ENCODE measurements at regions of chr1 and their contacts with region 1.

Region 1: GRCh38 chr1:55284852-55285251 is 69.7 kb upstream of the USP24 start:
- DNase-seq: peak; percentile 43
- H3K4me3 ChIP-seq: no peak overlapping the region
- H3K27ac ChIP-seq: no peak overlapping the region
- H3K27me3 ChIP-seq: no peaks in the 10 kb centered on the region
- CTCF ChIP-seq: peak; percentile 74

Region 2: DNA sequence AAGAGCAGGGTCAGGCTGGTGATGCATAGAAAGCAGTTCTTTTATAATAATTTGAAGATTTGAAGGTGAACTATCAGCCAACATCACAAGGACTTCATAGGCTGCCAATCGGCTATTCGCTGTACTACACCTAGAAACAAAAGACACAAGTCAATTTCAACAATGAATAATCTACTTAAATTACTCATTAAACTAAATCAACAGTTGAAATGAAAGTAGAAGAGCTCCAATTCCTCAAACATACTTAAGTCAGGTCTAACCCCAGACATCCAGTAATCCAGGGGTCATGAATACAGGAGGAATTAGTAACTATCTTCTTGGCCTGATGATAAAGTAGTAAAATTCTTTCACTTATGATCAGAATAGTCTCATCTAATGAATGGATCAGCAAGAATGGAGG is 181.0 kb before region 1 on chr1:
- in situ Hi-C with region 1: no loop called
- DNase-seq: no peak
- H3K4me3 ChIP-seq: no peak overlapping the region
- H3K27ac ChIP-seq: no peak overlapping the region
- H3K27me3 ChIP-seq: no peaks in the 10 kb centered on the region
- CTCF ChIP-seq: no peak

Region 3: DNA sequence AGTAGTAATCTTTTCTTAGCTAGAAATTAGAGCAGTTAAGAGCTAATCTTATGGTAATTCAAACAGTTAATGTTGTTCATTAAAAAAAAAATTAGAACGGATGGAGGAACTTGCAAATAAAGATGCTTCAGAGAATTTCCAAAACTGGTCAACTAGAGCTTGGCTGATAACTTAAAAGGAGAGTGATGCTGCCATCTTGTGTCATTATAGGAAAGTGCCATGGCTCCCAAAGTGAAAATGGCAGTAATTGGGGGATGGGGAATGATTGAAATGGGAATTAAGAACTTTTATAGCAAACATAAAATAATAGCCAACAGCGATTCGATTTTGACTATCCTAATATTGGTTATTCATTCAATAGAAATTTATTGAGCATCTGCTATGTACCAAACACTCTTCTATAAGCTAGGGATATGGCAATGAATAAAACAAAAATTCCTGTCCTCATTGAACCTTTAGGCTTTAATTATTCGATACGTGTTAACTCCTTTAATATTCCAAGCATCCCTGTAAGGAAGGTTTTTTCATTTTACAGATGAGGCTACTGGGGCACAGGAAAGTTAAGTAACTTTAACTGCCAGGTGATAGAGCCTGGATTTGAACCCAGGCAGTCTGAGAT is 1300.2 kb after region 1 on chr1:
- in situ Hi-C with region 1: loop called (anchors 10 kb)
- DNase-seq: peak; percentile 50
- H3K4me3 ChIP-seq: no peak overlapping the region
- H3K27ac ChIP-seq: no peak overlapping the region
- H3K27me3 ChIP-seq: no peaks in the 10 kb centered on the region
- CTCF ChIP-seq: peak; percentile 74

Measured in brain microvascular endothelial cell (primary cell).